CD8-positive, alpha-beta memory T cell (primary cell): ENCODE measurements at regions of chr1 and their contacts with region 1.

Region 1: GRCh38 chr1:91929250-91929649 is 20.0 kb upstream of the BRDT start:
- DNase-seq: no peak
- H3K4me3 ChIP-seq: no peak overlapping the region
- H3K4me3 Mint-ChIP-seq: no peak overlapping the region
- H3K27ac ChIP-seq: no peak overlapping the region
- H3K27ac Mint-ChIP-seq: peak overlapping the region in 2 of 8 donors; percentile 3 to 47
- H3K4me1 ChIP-seq: no peaks in the 10 kb centered on the region
- H3K4me1 Mint-ChIP-seq: peaks cover 0 to 2% (median under 1%) of the 10 kb centered on the region in 3 donors
- H3K27me3 ChIP-seq: no peaks in the 10 kb centered on the region
- H3K27me3 Mint-ChIP-seq: no peaks in the 10 kb centered on the region

Region 2: DNA sequence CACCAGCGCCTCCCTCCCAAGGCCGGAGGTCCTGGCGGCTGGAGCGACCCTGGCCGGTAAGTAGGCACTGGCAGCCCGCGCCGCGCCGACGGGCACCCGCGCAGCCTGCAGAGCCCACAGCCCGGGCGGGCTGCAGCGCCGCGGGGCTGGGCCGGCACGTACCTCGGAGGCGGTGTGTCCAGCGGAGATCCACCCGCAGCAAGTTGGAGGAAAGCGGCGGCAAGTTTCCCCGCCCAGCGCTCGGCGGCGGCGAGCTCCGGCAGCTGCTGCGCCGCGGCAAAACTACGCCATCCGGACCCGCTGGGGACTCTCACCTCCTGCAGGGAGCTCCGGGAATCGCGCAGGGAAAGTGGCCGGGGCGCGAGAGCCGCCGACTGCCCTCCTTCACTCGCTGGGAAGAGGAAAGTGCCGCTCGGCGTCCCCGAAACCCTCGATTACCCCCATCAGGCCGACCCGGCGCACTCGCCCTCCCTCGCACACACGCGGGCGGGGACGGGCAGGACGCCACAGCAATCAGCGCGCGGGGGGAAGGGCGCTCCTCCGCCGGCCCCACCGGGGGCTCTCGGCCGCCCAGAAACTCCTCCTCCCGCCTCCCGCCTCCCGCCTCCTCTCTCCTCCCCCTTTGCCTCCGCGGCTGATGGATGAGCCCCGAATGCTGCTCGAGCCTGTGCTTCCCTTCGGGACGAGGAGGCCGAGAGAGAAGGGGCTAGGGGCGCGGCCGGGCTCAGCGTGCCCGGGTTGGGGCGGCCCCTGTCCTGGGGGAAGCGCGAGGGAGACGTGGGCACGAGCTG is 43.3 kb before region 1 on chr1 and contains the start of gene TGFBR3:
- CTCF ChIA-PET with region 1: interaction called, 23 read pairs
- POLR2A ChIA-PET with region 1: no interaction called
- DNase-seq: peak; percentile 75 to 81 (median 78)
- H3K4me3 ChIP-seq: peak within 1 kb of the TSS; percentile 69
- H3K4me3 Mint-ChIP-seq: peak within 1 kb of the TSS; percentile 94 to 99 (median 98)
- H3K27ac ChIP-seq: peak within 1 kb of the TSS; percentile 71
- H3K27ac Mint-ChIP-seq: peak within 1 kb of the TSS; percentile 69 to 99 (median 92)
- H3K4me1 ChIP-seq: peaks cover 17% of the 10 kb centered on the region
- H3K4me1 Mint-ChIP-seq: peaks cover 41 to 52% (median 51%) of the 10 kb centered on the region in 3 donors
- H3K27me3 ChIP-seq: no peaks in the 10 kb centered on the region
- H3K27me3 Mint-ChIP-seq: peaks cover 0 to 2% of the 10 kb centered on the region in 2 donors
- total RNA-seq, gene TGFBR3: 28.8 to 29.9 TPM